HepG2 (cell line): ENCODE measurements at regions of chr6 and their contacts with region 1.

Region 1: DNA sequence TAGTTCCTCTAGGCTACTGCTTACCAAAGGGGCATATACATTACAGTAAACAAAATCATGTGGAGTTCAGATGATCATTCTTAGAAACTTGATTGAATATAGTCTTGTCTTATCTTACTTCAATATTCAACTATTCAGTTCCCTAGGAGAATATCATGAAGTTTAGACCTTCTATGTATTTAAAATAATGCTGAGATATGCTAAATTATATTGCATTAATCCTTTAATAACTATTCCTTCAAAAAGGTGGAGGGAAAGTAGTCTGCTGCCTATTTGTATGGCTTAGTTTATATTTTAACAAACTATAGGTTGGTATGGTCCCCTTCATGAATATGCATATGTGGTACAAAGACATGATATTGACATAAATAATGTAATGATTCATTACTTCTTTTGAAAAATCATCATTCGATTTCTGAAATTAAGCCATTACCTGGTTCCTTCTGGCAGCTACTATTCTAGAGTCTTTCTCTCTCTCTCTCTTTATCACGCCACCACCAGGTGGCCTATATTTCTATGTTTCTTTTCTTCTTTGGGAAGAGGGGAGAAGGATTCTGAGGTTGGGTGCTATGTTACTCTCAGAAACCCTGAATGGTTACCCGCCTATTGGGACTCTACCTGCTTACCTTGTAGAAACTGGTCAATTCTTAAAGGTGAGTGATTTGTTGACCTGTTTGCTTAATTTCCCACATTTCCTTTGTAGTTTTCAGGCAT is 855.8 kb downstream of the HACE1 start:
- DNase-seq: peak; percentile 13
- ATAC-seq: peak; percentile 59; the same call in 2 of the 3 replicates
- H3K4me3 ChIP-seq: no peak overlapping the region
- H3K27ac ChIP-seq: no peak overlapping the region
- H3K4me1 ChIP-seq: no peaks in the 10 kb centered on the region
- H3K27me3 ChIP-seq: no peaks in the 10 kb centered on the region
- CTCF ChIP-seq: peak; percentile 14; the same call in 1 of the 2 replicates
- EP300 ChIP-seq: no peak
- POLR2A ChIP-seq: no peak
- RAD21 ChIP-seq: no peak

Region 2: DNA sequence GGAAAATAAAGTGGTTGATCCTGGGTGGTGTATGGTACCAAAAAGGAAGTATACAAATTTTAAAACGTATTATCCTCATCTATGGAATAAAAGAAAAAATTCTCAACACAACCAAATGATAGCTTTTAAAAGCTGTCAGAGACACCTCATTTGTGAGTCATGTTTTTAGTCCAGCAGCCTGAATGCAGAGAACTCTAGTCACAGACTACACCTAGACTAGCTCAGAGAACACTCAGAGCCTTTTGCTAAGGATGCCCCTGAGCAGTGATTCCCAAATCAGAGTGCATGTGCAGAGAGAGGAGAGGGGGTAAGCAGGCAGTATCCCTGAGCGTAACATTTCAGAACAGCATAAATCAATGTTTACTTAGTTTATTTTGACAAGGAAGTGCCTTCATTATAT is 46.5 kb after region 1 on chr6:
- CTCF ChIA-PET with region 1: no interaction called
- POLR2A ChIA-PET with region 1: no interaction called
- in situ Hi-C with region 1: no loop called
- intact Hi-C with region 1: no loop called
- DNase-seq: no peak
- ATAC-seq: no peak
- H3K4me3 ChIP-seq: no peak overlapping the region
- H3K27ac ChIP-seq: no peak overlapping the region
- H3K4me1 ChIP-seq: no peaks in the 10 kb centered on the region
- H3K27me3 ChIP-seq: no peaks in the 10 kb centered on the region; a peak in 1 of 5 replicates
- CTCF ChIP-seq: no peak
- EP300 ChIP-seq: no peak
- POLR2A ChIP-seq: no peak
- RAD21 ChIP-seq: no peak

Region 3: DNA sequence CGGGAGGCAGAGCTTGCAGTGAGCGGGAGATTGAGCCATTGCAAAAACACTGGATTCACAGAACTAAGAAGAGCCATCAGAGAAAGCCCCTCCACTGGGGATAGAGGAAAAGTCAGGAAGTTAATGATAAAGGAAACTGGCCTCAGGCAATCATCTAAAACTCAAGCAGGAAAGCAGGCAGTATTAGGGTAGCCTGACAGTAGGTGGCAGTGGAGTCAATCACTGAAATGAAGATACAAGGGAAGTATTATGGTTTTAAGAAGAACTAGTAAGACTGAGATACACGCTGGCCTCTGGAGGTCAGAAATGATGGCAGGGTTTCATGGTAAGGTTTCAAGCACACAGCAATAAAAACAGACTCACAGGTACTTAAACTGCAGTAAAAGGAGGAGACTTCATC is 277.4 kb after region 1 on chr6:
- CTCF ChIA-PET with region 1: no interaction called
- POLR2A ChIA-PET with region 1: no interaction called
- in situ Hi-C with region 1: no loop called
- intact Hi-C with region 1: no loop called
- DNase-seq: no peak
- ATAC-seq: no peak
- H3K4me3 ChIP-seq: no peak overlapping the region
- H3K27ac ChIP-seq: no peak overlapping the region
- H3K4me1 ChIP-seq: no peaks in the 10 kb centered on the region
- H3K27me3 ChIP-seq: no peaks in the 10 kb centered on the region; a peak in 1 of 5 replicates
- CTCF ChIP-seq: no peak
- EP300 ChIP-seq: no peak
- POLR2A ChIP-seq: no peak
- RAD21 ChIP-seq: no peak

Region 4: DNA sequence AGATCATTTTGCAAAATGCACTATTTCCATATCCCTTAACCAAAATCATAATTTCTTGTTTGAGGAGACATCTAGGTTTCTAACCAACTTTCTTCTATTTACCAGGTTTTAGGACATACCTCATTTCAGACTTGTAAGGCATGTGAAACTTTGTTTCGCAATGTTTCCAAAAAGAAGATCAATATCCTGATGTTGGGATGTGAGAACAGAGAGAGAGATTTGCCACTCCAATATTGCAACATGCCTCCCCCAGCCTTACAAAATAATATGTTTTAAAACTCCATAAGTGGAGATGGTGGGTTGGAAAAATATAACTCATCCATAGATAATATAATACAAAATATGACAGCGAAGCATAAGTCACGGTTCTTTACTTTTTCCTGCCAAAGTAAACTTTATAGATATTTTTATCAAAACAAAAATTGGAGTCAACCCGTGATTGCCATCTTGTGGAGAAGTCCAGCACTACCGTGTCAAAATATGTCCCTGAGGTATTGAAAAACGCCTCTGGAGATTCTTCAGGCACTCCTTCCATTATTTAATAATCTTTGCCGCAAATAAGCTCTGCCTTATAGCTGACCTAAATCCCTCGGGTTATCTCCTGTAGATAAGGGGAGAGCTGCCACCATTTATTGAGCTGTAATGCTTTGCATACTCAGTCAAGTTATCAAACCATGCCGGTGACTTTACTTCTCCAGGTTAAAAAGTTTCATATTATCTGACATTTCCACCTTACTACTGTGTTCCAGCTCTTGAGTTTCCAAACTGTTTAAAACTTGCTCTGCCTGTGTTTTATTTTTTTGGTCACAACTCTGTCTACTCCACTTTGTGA is 321.6 kb after region 1 on chr6:
- CTCF ChIA-PET with region 1: no interaction called
- POLR2A ChIA-PET with region 1: no interaction called
- in situ Hi-C with region 1: no loop called
- intact Hi-C with region 1: loop called (anchors 5 kb)
- DNase-seq: no peak
- ATAC-seq: no peak
- H3K4me3 ChIP-seq: no peak overlapping the region
- H3K27ac ChIP-seq: no peak overlapping the region
- H3K4me1 ChIP-seq: no peaks in the 10 kb centered on the region
- H3K27me3 ChIP-seq: no peaks in the 10 kb centered on the region
- CTCF ChIP-seq: peak; percentile 43
- EP300 ChIP-seq: no peak
- POLR2A ChIP-seq: no peak
- RAD21 ChIP-seq: no peak

Region 5: GRCh38 chr6:104483225-104483834 is 479.4 kb after region 1 on chr6:
- CTCF ChIA-PET with region 1: no interaction called
- POLR2A ChIA-PET with region 1: no interaction called
- in situ Hi-C with region 1: no loop called
- intact Hi-C with region 1: loop called (anchors 5 kb)
- DNase-seq: peak; percentile 7
- ATAC-seq: no peak
- H3K4me3 ChIP-seq: no peak overlapping the region
- H3K27ac ChIP-seq: no peak overlapping the region
- H3K4me1 ChIP-seq: no peaks in the 10 kb centered on the region
- H3K27me3 ChIP-seq: no peaks in the 10 kb centered on the region
- CTCF ChIP-seq: peak; percentile 27
- EP300 ChIP-seq: no peak
- POLR2A ChIP-seq: no peak
- RAD21 ChIP-seq: no peak

Region 6: GRCh38 chr6:104771258-104771832 is 767.4 kb after region 1 on chr6:
- CTCF ChIA-PET with region 1: no interaction called
- POLR2A ChIA-PET with region 1: no interaction called
- in situ Hi-C with region 1: no loop called
- intact Hi-C with region 1: loop called (anchors 5 kb)
- DNase-seq: peak; percentile 10
- ATAC-seq: peak; percentile 76
- H3K4me3 ChIP-seq: no peak overlapping the region
- H3K27ac ChIP-seq: no peak overlapping the region
- H3K4me1 ChIP-seq: no peaks in the 10 kb centered on the region
- H3K27me3 ChIP-seq: no peaks in the 10 kb centered on the region
- CTCF ChIP-seq: peak; percentile 48
- EP300 ChIP-seq: no peak
- POLR2A ChIP-seq: no peak
- RAD21 ChIP-seq: no peak